ENCODE measurements at regions of chr2 and their contacts with region 1.

Region 1: DNA sequence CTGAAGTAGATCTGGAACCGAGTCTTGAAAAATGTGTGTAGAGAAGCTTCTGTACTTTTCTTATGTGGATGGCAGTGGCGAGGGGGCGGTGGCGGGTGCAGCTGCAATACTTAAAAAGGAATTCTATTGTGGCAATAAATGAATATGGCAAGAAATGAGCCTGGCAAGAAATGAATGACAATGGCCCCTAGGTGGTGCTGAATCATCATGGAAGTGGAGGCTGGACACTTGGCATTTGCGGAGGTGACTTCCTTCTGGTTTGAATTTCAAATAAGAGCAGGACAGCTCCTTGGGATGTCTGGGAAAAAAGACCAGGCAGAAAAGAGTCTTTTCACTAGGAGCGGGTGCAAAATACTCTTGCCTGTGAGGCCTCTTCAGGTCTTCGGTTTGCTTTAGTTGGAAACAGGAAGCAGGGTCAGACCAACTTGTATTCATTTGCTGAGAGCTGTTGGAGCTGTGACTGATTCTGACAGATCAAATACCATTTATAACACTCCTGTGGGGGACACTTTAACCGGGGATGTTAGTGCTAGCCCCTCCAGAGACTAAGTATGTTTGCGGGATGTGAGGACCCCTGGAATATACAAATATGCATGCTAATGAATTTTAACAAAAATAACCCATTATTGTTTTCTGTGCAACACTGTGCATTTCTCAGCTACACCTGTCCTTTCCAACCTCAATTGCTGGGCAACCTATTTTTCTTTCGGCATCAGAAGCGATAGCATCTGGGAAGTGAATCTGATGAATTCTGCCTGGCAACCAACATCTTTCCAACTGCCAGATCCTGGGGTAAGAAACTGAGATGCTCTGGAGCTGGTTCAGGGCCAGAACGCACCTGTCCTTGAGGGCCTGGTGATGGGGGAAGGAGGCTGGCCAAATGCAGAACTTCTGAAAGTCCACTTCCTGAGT is 35.4 kb downstream of the FASTKD2 start:
- DNase-seq: peak; percentile 61
- ATAC-seq: peak; percentile 40
- H3K4me3 Mint-ChIP-seq: peak overlapping the region; percentile 22
- H3K27ac Mint-ChIP-seq: peak overlapping the region; percentile 52
- H3K4me1 Mint-ChIP-seq: peaks cover 31% of the 10 kb centered on the region
- H3K27me3 Mint-ChIP-seq: no peaks in the 10 kb centered on the region

Region 2: DNA sequence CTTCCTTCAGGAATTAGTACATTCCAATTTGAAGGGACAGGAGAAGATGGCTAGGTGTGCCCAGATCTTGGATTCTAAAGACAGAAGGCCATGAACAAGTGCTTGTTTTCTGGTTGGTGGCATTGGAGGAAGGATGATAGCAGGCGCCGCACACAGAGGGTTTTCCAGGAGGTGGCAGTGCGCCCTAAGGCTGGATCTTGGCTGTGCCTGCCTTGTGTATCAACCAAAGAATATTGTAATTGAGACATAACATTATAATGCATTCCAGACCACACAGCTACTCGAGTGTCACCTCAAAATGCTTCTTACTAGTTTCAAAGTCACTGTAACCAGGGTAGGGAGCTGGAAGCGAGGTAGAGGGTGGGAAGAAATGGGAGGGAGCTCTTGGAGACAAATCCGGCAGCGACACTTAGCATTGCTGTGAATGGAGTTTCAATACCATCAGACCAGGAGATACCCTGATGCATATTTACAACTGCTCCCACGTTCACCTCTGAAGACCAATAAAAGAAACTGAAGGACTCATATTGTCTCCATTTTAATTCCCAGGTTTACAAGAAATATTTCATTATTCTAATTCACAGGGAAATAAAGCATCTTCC is 181.1 kb after region 1 on chr2:
- CTCF ChIA-PET with region 1: interaction called, 3 read pairs
- POLR2A ChIA-PET with region 1: no interaction called
- intact Hi-C with region 1: loop called in 1 of 2 experiments (anchors 5 kb)
- DNase-seq: peak; percentile 76
- ATAC-seq: peak; percentile 80
- H3K4me3 Mint-ChIP-seq: no peak overlapping the region
- H3K27ac Mint-ChIP-seq: no peak overlapping the region
- H3K4me1 Mint-ChIP-seq: peaks cover 19% of the 10 kb centered on the region
- H3K27me3 Mint-ChIP-seq: no peaks in the 10 kb centered on the region

Region 3: GRCh38 chr2:206989306-206989705 is 188.5 kb after region 1 on chr2:
- CTCF ChIA-PET with region 1: interaction called, 3 read pairs
- POLR2A ChIA-PET with region 1: no interaction called
- intact Hi-C with region 1: loop called (anchors 2 to 5 kb)
- DNase-seq: peak; percentile 34
- ATAC-seq: no peak
- H3K4me3 Mint-ChIP-seq: no peak overlapping the region
- H3K27ac Mint-ChIP-seq: no peak overlapping the region
- H3K4me1 Mint-ChIP-seq: peaks cover 34% of the 10 kb centered on the region
- H3K27me3 Mint-ChIP-seq: peaks cover 2% of the 10 kb centered on the region

Region 4: GRCh38 chr2:207046724-207047123 is 246.0 kb after region 1 on chr2:
- CTCF ChIA-PET with region 1: no interaction called
- POLR2A ChIA-PET with region 1: no interaction called
- intact Hi-C with region 1: loop called in 1 of 2 experiments (anchors 2 kb)
- DNase-seq: peak; percentile 44
- ATAC-seq: peak; percentile 95
- H3K4me3 Mint-ChIP-seq: no peak overlapping the region
- H3K27ac Mint-ChIP-seq: peak overlapping the region; percentile 19
- H3K4me1 Mint-ChIP-seq: peaks cover 13% of the 10 kb centered on the region
- H3K27me3 Mint-ChIP-seq: no peaks in the 10 kb centered on the region